A549 (cell line): ENCODE measurements at regions of chr5 and their contacts with region 1.

Region 1: DNA sequence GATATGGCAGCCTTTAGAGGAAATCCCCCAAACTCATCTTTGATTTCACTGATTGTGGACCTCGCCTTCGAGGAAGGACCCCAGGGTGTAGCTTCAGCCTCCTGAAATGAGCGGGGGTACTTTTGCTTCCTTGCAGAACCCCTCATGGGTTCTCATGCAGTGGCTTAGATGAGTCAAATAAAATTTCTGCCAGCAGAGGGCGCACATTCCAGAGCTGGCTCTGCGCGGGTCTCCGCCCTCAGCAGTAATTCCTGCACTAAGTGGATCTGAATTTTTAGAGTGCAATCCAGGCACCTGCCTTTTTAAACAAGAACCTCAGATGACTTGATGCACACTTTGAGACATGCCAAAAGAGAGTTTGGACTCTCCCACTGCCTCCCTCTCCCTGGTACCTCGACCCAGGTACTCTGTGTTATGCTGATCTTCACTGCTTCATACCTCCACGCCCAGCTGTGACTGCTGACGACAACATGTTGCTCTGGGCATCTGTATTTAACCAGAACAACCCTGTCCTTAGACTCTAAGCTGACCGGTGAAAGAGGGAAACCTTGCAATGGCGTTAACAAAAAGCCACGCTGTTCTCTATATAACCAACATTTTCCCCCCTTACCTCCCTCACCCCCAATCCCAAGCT is 7.3 kb downstream of the EGFLAM start:
- DNase-seq: peak; percentile 46 to 51
- ATAC-seq: peak; percentile 93 to 99
- H3K4me3 ChIP-seq: no peak overlapping the region
- H3K27ac ChIP-seq: no peak overlapping the region
- H3K4me1 ChIP-seq: no peaks in the 10 kb centered on the region
- CTCF ChIP-seq: peak; percentile 72
- EP300 ChIP-seq: no peak
- POLR2A ChIP-seq: no peak
- RAD21 ChIP-seq: peak; percentile 35 to 38; a peak in 2 of 5 replicates

Region 2: GRCh38 chr5:38208782-38209378 is 56.8 kb before region 1 on chr5:
- CTCF ChIA-PET with region 1: interaction called, 10 read pairs
- POLR2A ChIA-PET with region 1: no interaction called
- DNase-seq: peak; percentile 19 to 61
- ATAC-seq: peak; percentile 74 to 82; a peak in 5 of 6 replicates
- H3K4me3 ChIP-seq: no peak overlapping the region
- H3K27ac ChIP-seq: no peak overlapping the region
- H3K4me1 ChIP-seq: no peaks in the 10 kb centered on the region
- CTCF ChIP-seq: peak; percentile 68
- EP300 ChIP-seq: no peak
- POLR2A ChIP-seq: no peak
- RAD21 ChIP-seq: peak; percentile 76 to 79

Region 3: DNA sequence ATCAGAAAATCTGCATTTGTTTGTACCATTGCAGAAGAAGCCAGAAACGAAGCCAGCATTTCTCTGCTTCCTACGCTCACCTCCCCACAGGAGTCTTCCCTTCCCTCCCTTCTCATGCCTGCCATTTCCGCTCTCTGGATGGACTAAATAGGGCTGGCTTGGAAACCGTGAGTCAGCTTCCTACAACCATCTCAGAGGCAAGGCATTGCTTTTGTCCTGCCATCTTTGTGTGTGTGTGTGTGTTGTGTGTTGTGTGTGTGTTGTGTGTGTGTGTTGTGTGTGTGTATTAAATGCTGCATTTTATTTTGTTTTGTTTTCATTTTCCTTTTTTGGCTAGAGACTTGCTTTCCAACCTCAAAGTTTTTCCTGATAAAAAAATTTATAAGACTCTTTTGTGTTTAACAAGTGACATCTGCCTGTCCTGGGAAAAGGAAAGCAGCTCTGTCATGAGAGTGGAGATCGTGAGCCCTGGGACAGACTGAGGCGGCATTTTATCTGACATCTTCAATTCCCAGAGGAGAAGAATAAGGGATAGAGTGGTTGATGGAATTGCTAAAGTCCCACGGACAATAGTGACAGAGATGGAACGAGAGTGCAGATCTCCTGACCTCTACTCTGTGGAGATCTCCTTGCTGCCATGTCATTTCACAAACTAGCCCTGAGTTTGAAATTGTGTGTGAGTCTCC is 14.8 kb before region 1 on chr5:
- CTCF ChIA-PET with region 1: interaction called, 19 read pairs
- POLR2A ChIA-PET with region 1: no interaction called
- DNase-seq: no peak
- ATAC-seq: no peak
- H3K4me3 ChIP-seq: no peak overlapping the region
- H3K27ac ChIP-seq: no peak overlapping the region
- H3K4me1 ChIP-seq: no peaks in the 10 kb centered on the region
- CTCF ChIP-seq: no peak
- EP300 ChIP-seq: no peak
- POLR2A ChIP-seq: no peak
- RAD21 ChIP-seq: no peak

Region 4: GRCh38 chr5:38285226-38285625 is 19.6 kb after region 1 on chr5:
- CTCF ChIA-PET with region 1: interaction called, 24 read pairs
- POLR2A ChIA-PET with region 1: no interaction called
- DNase-seq: no peak
- ATAC-seq: no peak
- H3K4me3 ChIP-seq: no peak overlapping the region
- H3K27ac ChIP-seq: no peak overlapping the region
- H3K4me1 ChIP-seq: no peaks in the 10 kb centered on the region
- CTCF ChIP-seq: no peak
- EP300 ChIP-seq: no peak
- POLR2A ChIP-seq: no peak
- RAD21 ChIP-seq: no peak